Right lobe of liver (tissue), 6 donors: ENCODE measurements at regions of chr11 and their contacts with region 1.

Region 1: DNA sequence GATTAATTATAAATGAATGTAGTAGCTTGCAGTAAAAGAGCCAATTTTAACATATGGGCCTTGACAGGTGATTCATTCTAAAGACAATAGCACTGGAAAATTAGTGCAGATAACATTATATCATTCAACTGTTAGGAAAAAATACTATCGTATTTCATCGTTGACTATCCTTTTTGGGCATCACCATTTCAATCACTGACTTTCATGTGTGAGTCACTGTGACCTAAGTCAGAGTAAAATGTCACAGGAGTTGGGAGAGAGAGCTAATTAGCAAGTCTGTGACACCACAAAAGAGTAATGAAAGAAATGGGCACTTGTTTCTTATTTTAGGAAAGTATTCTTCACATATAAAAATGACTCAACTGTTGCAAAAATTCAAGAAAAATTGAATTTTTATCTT is 253.8 kb upstream of the CNTN5 start:
- DNase-seq: no peak
- ATAC-seq: no peak
- H3K4me3 ChIP-seq: no peak overlapping the region
- H3K27ac ChIP-seq: no peak overlapping the region
- H3K4me1 ChIP-seq: no peaks in the 10 kb centered on the region
- H3K27me3 ChIP-seq: no peaks in the 10 kb centered on the region
- CTCF ChIP-seq: no peak
- POLR2A ChIP-seq: no peak

Region 2: DNA sequence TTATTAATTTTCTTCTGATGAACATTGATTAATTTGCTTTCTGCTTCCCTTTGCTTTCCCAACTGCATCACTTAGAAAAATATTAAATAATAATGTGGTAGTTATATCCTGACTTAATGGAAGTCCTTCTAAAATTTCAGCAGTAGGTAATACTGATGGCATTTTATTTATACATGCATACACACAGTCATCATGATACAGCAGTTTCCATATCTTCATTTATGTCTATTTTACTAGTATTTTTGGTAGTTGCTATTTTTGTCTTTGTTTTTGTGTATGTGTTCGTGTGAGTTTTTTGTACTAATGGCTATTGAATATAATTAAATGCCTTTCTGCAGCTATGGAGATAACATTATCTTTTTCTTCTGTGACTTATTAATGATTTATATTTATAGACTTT is 230.9 kb before region 1 on chr11:
- intact Hi-C with region 1: no loop called
- DNase-seq: no peak
- ATAC-seq: no peak
- H3K4me3 ChIP-seq: no peak overlapping the region
- H3K27ac ChIP-seq: no peak overlapping the region
- H3K4me1 ChIP-seq: no peaks in the 10 kb centered on the region
- H3K27me3 ChIP-seq: peaks cover 0 to 4% of the 10 kb centered on the region in 2 donors
- CTCF ChIP-seq: no peak
- POLR2A ChIP-seq: no peak

Region 3: GRCh38 chr11:98701541-98701940 is 65.4 kb before region 1 on chr11:
- intact Hi-C with region 1: loop called in 1 of 2 experiments (anchors 10 kb)
- DNase-seq: no peak
- ATAC-seq: no peak
- H3K4me3 ChIP-seq: no peak overlapping the region
- H3K27ac ChIP-seq: no peak overlapping the region
- H3K4me1 ChIP-seq: no peaks in the 10 kb centered on the region
- H3K27me3 ChIP-seq: no peaks in the 10 kb centered on the region
- CTCF ChIP-seq: no peak
- POLR2A ChIP-seq: no peak

Region 4: GRCh38 chr11:98952110-98952509 is 185.2 kb after region 1 on chr11:
- intact Hi-C with region 1: no loop called
- DNase-seq: no peak
- ATAC-seq: no peak
- H3K4me3 ChIP-seq: no peak overlapping the region
- H3K27ac ChIP-seq: no peak overlapping the region
- H3K4me1 ChIP-seq: no peaks in the 10 kb centered on the region
- H3K27me3 ChIP-seq: no peaks in the 10 kb centered on the region
- CTCF ChIP-seq: no peak
- POLR2A ChIP-seq: no peak